Esophagus muscularis mucosa (tissue), 4 donors: ENCODE measurements at regions of chr19 and their contacts with region 1.

Region 1: DNA sequence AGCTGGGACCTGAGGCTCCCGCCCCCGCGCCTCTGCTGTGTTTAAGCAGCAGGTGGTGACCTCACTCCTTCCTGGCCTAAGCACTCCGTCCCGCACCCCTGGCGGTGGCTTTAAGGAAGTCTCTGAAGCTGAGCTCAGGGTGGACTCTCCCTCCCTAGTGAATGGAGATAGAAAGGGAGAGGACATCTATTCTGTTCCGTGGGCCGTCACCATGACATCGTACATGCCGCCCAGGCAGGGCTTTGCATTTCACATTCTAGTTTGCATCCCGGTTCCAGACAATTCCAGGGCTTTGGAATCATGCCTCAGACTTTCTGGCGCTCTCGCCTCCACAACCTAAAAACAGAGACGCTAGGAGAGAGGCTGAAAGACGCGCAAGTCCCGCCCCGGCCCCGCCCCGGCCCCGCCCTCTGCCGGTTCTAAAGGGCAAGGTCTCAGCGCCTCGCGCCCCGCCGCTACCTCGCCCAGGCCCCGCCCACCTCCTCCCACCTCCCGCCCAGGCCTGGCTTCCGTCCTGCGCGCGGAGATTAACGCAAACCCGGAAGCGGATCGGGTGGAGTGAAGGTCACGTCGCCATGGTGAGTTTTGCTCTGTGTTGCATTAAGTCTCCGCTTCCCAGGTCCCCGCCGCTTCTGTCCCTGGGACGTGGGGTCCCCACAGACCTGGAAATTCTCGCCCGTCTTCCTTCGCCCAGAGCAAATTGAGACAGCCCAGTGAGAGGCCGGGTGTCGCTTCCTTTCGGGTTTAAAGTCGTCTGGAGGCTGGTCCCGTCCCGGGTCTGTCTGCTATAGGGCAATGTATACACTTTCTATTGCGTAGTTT is at the start of gene ZNF808:
- DNase-seq: peak; percentile 99
- H3K4me3 ChIP-seq: peak within 1 kb of the TSS; percentile 68 to 81 (median 74)
- H3K27ac ChIP-seq: peak within 1 kb of the TSS; percentile 83 to 95 (median 92)
- H3K4me1 ChIP-seq: peaks cover 12 to 27% (median 16%) of the 10 kb centered on the region in 4 donors
- H3K27me3 ChIP-seq: no peaks in the 10 kb centered on the region
- CTCF ChIP-seq: peak; percentile 49 to 70 (median 70)
- EP300 ChIP-seq: no peak
- POLR2A ChIP-seq: no peak
- total RNA-seq, gene ZNF808: 11.3 to 18.7 (median 14.2) TPM

Region 2: GRCh38 chr19:52048555-52049501 is 478.5 kb before region 1 on chr19 and contains the start of gene ZNF432:
- intact Hi-C with region 1: no loop called
- DNase-seq: peak; percentile 98
- H3K4me3 ChIP-seq: peak within 1 kb of the TSS; percentile 63 to 86 (median 70)
- H3K27ac ChIP-seq: peak within 1 kb of the TSS; percentile 91 to 95 (median 94)
- H3K4me1 ChIP-seq: peaks cover 3 to 23% (median 19%) of the 10 kb centered on the region in 4 donors
- H3K27me3 ChIP-seq: no peaks in the 10 kb centered on the region
- CTCF ChIP-seq: peak in 1 of 3 experiments; percentile 7
- EP300 ChIP-seq: no peak
- POLR2A ChIP-seq: peak; percentile 28
- total RNA-seq, gene ZNF432: 8.6 to 10.1 (median 9.2) TPM

Region 3: GRCh38 chr19:52492597-52493470 is 34.5 kb before region 1 on chr19:
- intact Hi-C with region 1: no loop called
- DNase-seq: no peak
- H3K4me3 ChIP-seq: peak overlapping the region; percentile 34 to 48 (median 46)
- H3K27ac ChIP-seq: no peak overlapping the region
- H3K4me1 ChIP-seq: peaks cover 0 to 15% (median 0%) of the 10 kb centered on the region in 4 donors
- H3K27me3 ChIP-seq: no peaks in the 10 kb centered on the region
- CTCF ChIP-seq: peak; percentile 24 to 43 (median 37)
- EP300 ChIP-seq: no peak
- POLR2A ChIP-seq: no peak

Region 4: GRCh38 chr19:52570000-52570861 is 42.9 kb after region 1 on chr19 and contains the start of gene ZNF701:
- intact Hi-C with region 1: loop called (anchors 5 kb)
- DNase-seq: peak; percentile 99
- H3K4me3 ChIP-seq: peak within 1 kb of the TSS; percentile 69 to 76 (median 74)
- H3K27ac ChIP-seq: peak within 1 kb of the TSS; percentile 80 to 90 (median 84)
- H3K4me1 ChIP-seq: peaks cover 6 to 25% (median 20%) of the 10 kb centered on the region in 4 donors
- H3K27me3 ChIP-seq: no peaks in the 10 kb centered on the region
- CTCF ChIP-seq: peak; percentile 21 to 52 (median 29)
- EP300 ChIP-seq: no peak
- POLR2A ChIP-seq: peak; percentile 84
- total RNA-seq, gene ZNF701: 7.8 to 13.3 (median 10.1) TPM

Region 5: GRCh38 chr19:53971673-53972072 is 1444.3 kb after region 1 on chr19:
- intact Hi-C with region 1: no loop called
- DNase-seq: no peak
- H3K4me3 ChIP-seq: no peak overlapping the region
- H3K27ac ChIP-seq: no peak overlapping the region
- H3K4me1 ChIP-seq: no peaks in the 10 kb centered on the region
- H3K27me3 ChIP-seq: peaks cover 0 to 82% (median 0%) of the 10 kb centered on the region in 4 donors
- CTCF ChIP-seq: no peak
- EP300 ChIP-seq: no peak
- POLR2A ChIP-seq: no peak